Activated CD8-positive, alpha-beta T cell treated with anti-CD3 and anti-CD28 coated beads for 36 hours (primary cell): ENCODE measurements at regions of chr21 and their contacts with region 1.

Region 1: DNA sequence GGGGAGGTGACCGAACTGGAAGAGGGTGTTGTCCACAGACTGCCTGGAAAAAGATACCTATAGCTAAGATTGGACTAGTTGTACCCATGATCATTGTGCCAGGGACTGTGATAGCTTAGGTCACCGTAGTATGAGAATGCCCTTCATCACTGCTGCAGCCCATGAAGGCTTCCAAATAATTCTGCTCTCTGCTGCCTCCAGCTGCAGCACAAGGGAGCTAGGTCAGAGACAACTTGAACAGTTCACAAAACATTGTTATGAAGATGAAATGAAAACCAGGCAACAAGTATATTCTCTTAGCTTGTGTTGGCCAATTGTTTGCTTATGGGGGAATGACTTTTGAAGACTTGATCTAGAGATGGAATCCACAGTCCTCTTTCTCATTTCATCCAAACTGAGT is 246.7 kb downstream of the MRPL39 start:
- DNase-seq: peak; percentile 10
- ATAC-seq: peak; percentile 64
- H3K4me3 Mint-ChIP-seq: no peak overlapping the region
- H3K27ac Mint-ChIP-seq: no peak overlapping the region
- H3K4me1 Mint-ChIP-seq: peaks cover 24% of the 10 kb centered on the region
- H3K27me3 Mint-ChIP-seq: no peaks in the 10 kb centered on the region
- CTCF ChIP-seq: peak; percentile 39

Region 2: GRCh38 chr21:25350056-25350455 is 10.5 kb before region 1 on chr21:
- CTCF ChIA-PET with region 1: interaction called, 13 read pairs
- POLR2A ChIA-PET with region 1: interaction called, 3 read pairs
- intact Hi-C with region 1: no loop called
- DNase-seq: peak; percentile 77
- ATAC-seq: peak; percentile 78
- H3K4me3 Mint-ChIP-seq: no peak overlapping the region
- H3K27ac Mint-ChIP-seq: no peak overlapping the region
- H3K4me1 Mint-ChIP-seq: peaks cover 5% of the 10 kb centered on the region
- H3K27me3 Mint-ChIP-seq: peaks cover 29% of the 10 kb centered on the region
- CTCF ChIP-seq: peak; percentile 75